ENCODE measurements at regions of chr5 and their contacts with region 1.

Region 1: DNA sequence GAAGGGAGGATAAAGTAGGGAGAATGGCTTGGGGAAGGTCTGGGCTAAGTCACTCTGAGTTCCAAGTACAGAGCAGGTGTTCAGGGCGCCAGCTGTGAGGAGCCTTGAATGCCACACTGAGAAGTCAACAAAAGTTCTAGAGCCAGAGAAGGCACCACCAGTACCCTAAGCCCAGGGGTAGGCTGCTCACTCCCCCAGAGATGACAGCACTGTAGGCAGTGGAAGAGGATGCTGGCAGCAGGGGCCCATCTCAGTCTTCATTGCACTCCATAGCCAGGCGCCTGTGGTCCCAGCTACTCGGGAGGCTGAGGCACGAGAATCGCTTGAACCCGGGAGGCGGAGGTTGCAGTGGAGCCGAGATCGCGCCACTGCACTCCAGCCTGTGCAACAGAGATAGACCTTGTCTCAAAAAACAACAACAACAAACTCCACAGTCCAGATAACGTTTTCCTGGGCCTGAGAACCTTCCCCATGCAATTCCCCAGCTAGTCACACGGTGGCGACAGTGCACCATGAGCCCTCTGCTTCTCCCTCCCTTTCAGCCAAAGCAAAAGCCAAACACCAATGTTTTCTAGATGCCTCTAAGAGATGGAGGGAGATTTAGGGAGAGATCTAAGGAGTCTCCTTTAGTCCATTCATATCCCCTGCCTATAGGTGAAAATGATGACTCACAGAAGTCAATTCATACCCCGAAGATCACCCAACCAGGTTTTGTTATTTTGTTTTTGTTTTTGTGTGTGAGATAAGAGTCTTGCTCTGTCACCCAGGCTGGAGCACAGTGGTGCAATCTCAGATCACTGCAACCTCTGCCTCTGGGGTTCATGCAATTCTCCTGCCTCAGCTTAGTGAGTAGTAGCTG is 19.8 kb upstream of the NSD1 start:
- DNase-seq: peak; percentile 63 to 84 (median 73)
- ATAC-seq: peak in 3 of 4 donors; percentile 60 to 68 (median 63)
- H3K4me3 ChIP-seq: peak overlapping the region in 6 of 12 donors; percentile 24 to 37 (median 29)
- H3K27ac ChIP-seq: peak overlapping the region in 9 of 12 donors; percentile 12 to 71 (median 54)
- H3K4me1 ChIP-seq: peaks cover 0 to 28% (median 15%) of the 10 kb centered on the region in 12 donors
- H3K27me3 ChIP-seq: no peaks in the 10 kb centered on the region
- CTCF ChIP-seq: peak; percentile 95 to 100 (median 99)
- POLR2A ChIP-seq: no peak

Region 2: GRCh38 chr5:176660860-176661641 is 452.7 kb before region 1 on chr5:
- intact Hi-C with region 1: loop called (anchors 2 to 5 kb)
- DNase-seq: peak; percentile 71 to 87 (median 76)
- ATAC-seq: peak; percentile 68 to 81 (median 77)
- H3K4me3 ChIP-seq: no peak overlapping the region
- H3K27ac ChIP-seq: no peak overlapping the region
- H3K4me1 ChIP-seq: peaks cover 0 to 31% (median 12%) of the 10 kb centered on the region in 12 donors
- H3K27me3 ChIP-seq: peaks cover 0 to 40% (median 14%) of the 10 kb centered on the region in 9 donors
- CTCF ChIP-seq: peak; percentile 85 to 100 (median 97)
- POLR2A ChIP-seq: no peak

Region 3: GRCh38 chr5:177133091-177133852 is 19.5 kb after region 1 on chr5 and contains the start of gene NSD1:
- intact Hi-C with region 1: loop called in 1 of 10 experiments (anchors 1 kb)
- DNase-seq: peak; percentile 90 to 95 (median 90)
- ATAC-seq: peak; percentile 62 to 85 (median 84)
- H3K4me3 ChIP-seq: peak within 1 kb of the TSS; percentile 59 to 88 (median 76)
- H3K27ac ChIP-seq: peak within 1 kb of the TSS; percentile 83 to 98 (median 94)
- H3K4me1 ChIP-seq: peaks cover 4 to 60% (median 41%) of the 10 kb centered on the region in 12 donors
- H3K27me3 ChIP-seq: no peaks in the 10 kb centered on the region
- CTCF ChIP-seq: no peak
- POLR2A ChIP-seq: peak in 1 of 2 donors; percentile 57
- total RNA-seq, gene NSD1: 25.8 to 64.6 (median 47.8) TPM

Region 4: DNA sequence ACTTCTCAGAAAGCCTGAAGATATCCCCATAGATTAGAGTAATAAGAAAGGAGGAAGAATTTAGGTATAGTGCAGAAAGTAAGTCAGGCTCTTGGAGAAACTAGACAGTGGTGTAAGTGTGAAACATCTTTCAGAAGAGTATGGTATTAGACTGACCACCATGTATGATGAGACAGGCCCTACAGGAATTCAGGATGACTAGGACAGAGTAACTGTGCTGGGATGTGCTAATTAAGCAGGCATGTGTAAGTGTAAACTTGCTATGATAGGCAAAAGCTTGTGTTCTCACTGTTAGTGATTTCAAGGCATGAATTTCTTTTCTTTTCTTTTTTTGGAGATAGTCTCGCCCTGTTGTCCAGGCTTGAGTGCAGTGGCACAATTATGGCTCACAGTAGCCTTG is 119.0 kb after region 1 on chr5:
- intact Hi-C with region 1: loop called in 4 of 10 experiments (anchors 10 kb)
- DNase-seq: no peak
- ATAC-seq: peak in 2 of 4 donors; percentile 38 to 42
- H3K4me3 ChIP-seq: no peak overlapping the region
- H3K27ac ChIP-seq: peak overlapping the region in 2 of 12 donors; percentile 17 to 41
- H3K4me1 ChIP-seq: peaks cover 0 to 44% (median 24%) of the 10 kb centered on the region in 12 donors
- H3K27me3 ChIP-seq: no peaks in the 10 kb centered on the region
- CTCF ChIP-seq: no peak
- POLR2A ChIP-seq: no peak

Region 5: GRCh38 chr5:177296581-177296980 is 182.8 kb after region 1 on chr5:
- intact Hi-C with region 1: loop called in 9 of 10 experiments (anchors 5 to 10 kb)
- DNase-seq: no peak
- ATAC-seq: peak in 2 of 4 donors; percentile 16 to 33
- H3K4me3 ChIP-seq: peak overlapping the region in 1 of 12 donors; percentile 15
- H3K27ac ChIP-seq: peak overlapping the region in 6 of 12 donors; percentile 1 to 71 (median 29)
- H3K4me1 ChIP-seq: peaks cover 0 to 55% (median 36%) of the 10 kb centered on the region in 12 donors
- H3K27me3 ChIP-seq: no peaks in the 10 kb centered on the region
- CTCF ChIP-seq: no peak
- POLR2A ChIP-seq: no peak

Region 6: GRCh38 chr5:177311723-177312648 is 198.2 kb after region 1 on chr5 and contains the start of gene MXD3:
- intact Hi-C with region 1: loop called in 5 of 10 experiments (anchors 5 to 10 kb)
- DNase-seq: peak; percentile 96 to 99 (median 97)
- ATAC-seq: peak; percentile 81 to 92 (median 90)
- H3K4me3 ChIP-seq: peak within 1 kb of the TSS; percentile 6 to 65 (median 58)
- H3K27ac ChIP-seq: peak within 1 kb of the TSS in 1 of 12 donors; percentile 10
- H3K4me1 ChIP-seq: peaks cover 0 to 65% (median 25%) of the 10 kb centered on the region in 12 donors
- H3K27me3 ChIP-seq: no peaks in the 10 kb centered on the region
- CTCF ChIP-seq: no peak
- POLR2A ChIP-seq: no peak
- total RNA-seq, gene MXD3: 0.52 to 9.1 (median 3.1) TPM

Region 7: GRCh38 chr5:177516604-177517568 is 403.1 kb after region 1 on chr5 and contains the start of gene DDX41:
- intact Hi-C with region 1: no loop called
- DNase-seq: peak; percentile 97 to 99 (median 98)
- ATAC-seq: peak; percentile 91 to 95 (median 92)
- H3K4me3 ChIP-seq: peak within 1 kb of the TSS; percentile 61 to 100 (median 88)
- H3K27ac ChIP-seq: peak within 1 kb of the TSS; percentile 79 to 94 (median 89)
- H3K4me1 ChIP-seq: peaks cover 0 to 33% (median 15%) of the 10 kb centered on the region in 12 donors
- H3K27me3 ChIP-seq: no peaks in the 10 kb centered on the region
- CTCF ChIP-seq: peak in 4 of 12 donors; percentile 8 to 20 (median 13)
- POLR2A ChIP-seq: peak in 1 of 2 donors; percentile 66
- total RNA-seq, gene DDX41: 24.4 to 53.8 (median 37.7) TPM